ENCODE measurements at regions of chr11 and their contacts with region 1.

Region 1: DNA sequence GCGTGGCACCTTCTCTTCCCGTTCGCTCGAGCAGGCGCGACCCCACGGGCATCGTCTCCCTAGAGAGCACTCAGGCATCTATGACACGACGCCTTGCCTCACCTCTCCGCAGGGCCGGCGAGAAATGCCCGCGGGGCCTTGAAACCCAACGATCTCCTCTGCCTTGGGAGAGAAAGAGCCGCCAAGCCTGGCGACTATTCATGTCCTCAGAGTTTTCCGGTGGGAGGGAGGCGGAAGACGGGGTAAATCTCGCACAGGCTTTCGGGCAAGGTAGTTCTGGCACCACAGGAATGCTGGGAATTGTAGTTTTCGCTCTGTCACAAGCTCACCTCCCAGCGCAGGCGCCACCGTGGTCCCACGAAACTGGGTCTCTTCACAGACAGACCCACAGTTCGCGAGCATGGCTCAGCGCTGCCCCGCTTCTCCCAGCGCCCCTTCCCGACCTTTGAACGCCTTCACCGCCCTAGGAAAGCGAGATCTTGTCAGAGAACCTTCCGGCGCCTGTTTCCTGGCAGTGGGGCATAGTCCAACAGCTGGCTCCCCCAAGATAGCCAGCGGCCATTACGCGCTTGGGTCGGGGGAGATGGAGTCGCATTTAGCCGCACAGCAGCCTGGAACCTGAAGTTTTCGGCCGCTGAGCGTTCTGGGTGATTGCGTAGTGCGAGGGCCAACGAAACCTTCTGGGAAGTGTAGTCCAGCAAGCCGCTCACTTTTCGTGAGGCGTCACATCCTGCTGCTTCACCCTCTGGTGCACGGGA is at the start of gene CCDC90B:
- DNase-seq: peak; percentile 96
- ATAC-seq: peak; percentile 94
- H3K4me3 Mint-ChIP-seq: peak within 1 kb of the TSS; percentile 81
- H3K27ac Mint-ChIP-seq: peak within 1 kb of the TSS; percentile 98
- H3K4me1 Mint-ChIP-seq: peaks cover 35% of the 10 kb centered on the region
- H3K27me3 Mint-ChIP-seq: no peaks in the 10 kb centered on the region
- total RNA-seq, gene CCDC90B: 30.4 to 32.8 TPM

Region 2: GRCh38 chr11:82733444-82734119 is 552.4 kb before region 1 on chr11 and contains the start of gene FAM181B:
- CTCF ChIA-PET with region 1: no interaction called
- POLR2A ChIA-PET with region 1: no interaction called
- intact Hi-C with region 1: loop called in 1 of 2 experiments (anchors 5 kb)
- DNase-seq: peak; percentile 61
- ATAC-seq: peak; percentile 82
- H3K4me3 Mint-ChIP-seq: peak within 1 kb of the TSS; percentile 45
- H3K27ac Mint-ChIP-seq: no peak within 1 kb of the TSS
- H3K4me1 Mint-ChIP-seq: peaks cover 10% of the 10 kb centered on the region
- H3K27me3 Mint-ChIP-seq: peaks cover 44% of the 10 kb centered on the region
- total RNA-seq, gene FAM181B: not detected

Region 3: GRCh38 chr11:82900277-82901164 is 385.4 kb before region 1 on chr11 and contains the start of gene PRCP:
- CTCF ChIA-PET with region 1: interaction called, 8 read pairs
- POLR2A ChIA-PET with region 1: interaction called, 18 read pairs
- intact Hi-C with region 1: loop called (anchors 1 kb)
- DNase-seq: peak; percentile 97
- ATAC-seq: peak; percentile 85
- H3K4me3 Mint-ChIP-seq: peak within 1 kb of the TSS; percentile 91
- H3K27ac Mint-ChIP-seq: peak within 1 kb of the TSS; percentile 100
- H3K4me1 Mint-ChIP-seq: peaks cover 44% of the 10 kb centered on the region
- H3K27me3 Mint-ChIP-seq: no peaks in the 10 kb centered on the region
- total RNA-seq, gene PRCP: 18.2 to 23.4 TPM

Region 4: GRCh38 chr11:83760932-83761331 is 475.0 kb after region 1 on chr11:
- CTCF ChIA-PET with region 1: no interaction called
- POLR2A ChIA-PET with region 1: no interaction called
- intact Hi-C with region 1: no loop called
- DNase-seq: no peak
- ATAC-seq: no peak
- H3K4me3 Mint-ChIP-seq: no peak overlapping the region
- H3K27ac Mint-ChIP-seq: no peak overlapping the region
- H3K4me1 Mint-ChIP-seq: no peaks in the 10 kb centered on the region
- H3K27me3 Mint-ChIP-seq: peaks cover 2% of the 10 kb centered on the region